SK-N-SH (cell line): ENCODE measurements at regions of chr22 and their contacts with region 1.

Region 1: DNA sequence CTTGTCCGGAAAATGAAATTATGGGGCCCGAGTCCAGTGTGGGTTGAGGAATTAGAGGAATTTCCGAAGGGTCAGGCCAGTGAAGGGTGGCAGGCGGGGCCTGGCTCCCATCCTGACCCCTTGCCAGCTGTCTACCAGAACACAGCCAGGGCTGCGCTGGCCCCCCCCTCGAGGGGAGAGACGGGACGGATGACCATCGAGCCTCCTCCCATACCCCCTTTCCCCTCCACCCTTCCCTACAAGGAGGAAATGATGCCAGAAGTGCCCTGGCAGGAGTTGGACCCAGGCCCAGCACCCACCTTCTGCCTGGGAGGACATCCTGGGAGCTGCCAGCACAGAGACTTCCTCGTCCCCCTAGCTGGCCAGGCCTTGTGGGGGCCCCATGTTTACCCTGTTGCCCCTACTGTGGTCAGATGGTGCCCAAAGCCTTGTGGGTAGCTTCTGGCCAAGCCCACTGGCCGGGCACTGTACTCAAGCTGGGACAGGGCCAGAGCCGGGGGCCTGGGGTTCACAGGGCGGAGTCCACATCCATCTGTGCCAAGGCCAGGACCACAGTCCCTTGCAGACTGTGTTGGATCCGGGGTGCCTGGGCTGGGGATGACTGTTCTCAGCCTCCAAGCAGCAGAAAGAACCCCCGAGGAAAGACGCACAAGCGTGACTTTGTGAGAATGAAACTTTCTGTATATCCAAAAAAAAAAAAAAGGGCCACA is 20.8 kb downstream of the ARVCF start:
- DNase-seq: no peak
- H3K4me3 ChIP-seq: no peak overlapping the region
- H3K27ac ChIP-seq: peak overlapping the region; percentile 47 to 97
- H3K4me1 ChIP-seq: peaks cover 0 to 85% of the 10 kb centered on the region in 2 experiments; a peak in 2 of 4 replicates
- H3K27me3 ChIP-seq: no peaks in the 10 kb centered on the region
- CTCF ChIP-seq: no peak
- EP300 ChIP-seq: no peak
- RAD21 ChIP-seq: no peak

Region 2: DNA sequence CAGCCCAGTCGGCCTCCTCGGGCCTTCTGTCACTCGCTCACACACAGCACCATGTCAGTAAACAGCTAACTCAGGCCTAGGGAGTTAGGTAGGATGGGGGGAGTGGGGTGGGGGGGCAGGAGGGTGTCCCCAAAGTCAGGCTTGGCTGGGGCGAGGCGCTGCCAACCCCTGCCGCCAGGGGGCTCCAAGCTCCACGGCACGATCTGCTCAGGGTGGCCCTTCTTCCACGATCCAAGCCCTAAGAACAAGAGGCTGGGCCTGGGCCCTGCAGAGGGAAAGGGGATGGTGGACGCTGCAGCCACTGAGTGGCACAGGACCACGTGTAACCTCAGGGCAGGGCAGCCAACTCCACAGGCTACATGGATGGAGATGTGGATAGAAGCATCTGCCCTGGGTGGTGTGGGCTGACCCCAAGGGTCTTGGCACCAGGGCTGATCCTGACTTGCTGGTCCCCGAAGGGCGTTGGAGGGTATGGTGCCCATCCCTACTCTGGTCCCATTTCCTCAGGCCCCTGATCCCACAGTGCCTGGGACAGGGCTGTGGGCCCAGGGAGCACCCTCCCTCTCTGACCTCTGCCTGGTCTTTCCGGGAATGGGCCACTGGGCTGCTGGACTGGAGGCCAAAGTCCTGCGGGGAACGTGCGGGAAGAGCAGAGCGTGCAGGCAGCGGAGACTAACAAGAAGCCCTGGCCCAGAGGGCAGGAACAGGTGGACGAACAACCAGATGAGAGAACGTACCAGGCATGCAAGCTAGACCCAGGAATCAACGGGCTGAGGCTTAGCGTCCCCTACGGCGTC is 25.1 kb before region 1 on chr22:
- CTCF ChIA-PET with region 1: interaction called, 19 read pairs
- POLR2A ChIA-PET with region 1: interaction called, 3 read pairs
- DNase-seq: peak; percentile 91
- H3K4me3 ChIP-seq: peak overlapping the region in 1 of 2 experiments; percentile 39; a peak in 1 of 4 replicates
- H3K27ac ChIP-seq: peak overlapping the region in 1 of 2 experiments; percentile 35; a peak in 1 of 4 replicates
- H3K4me1 ChIP-seq: peaks cover 0 to 24% of the 10 kb centered on the region in 2 experiments; a peak in 1 of 4 replicates
- H3K27me3 ChIP-seq: no peaks in the 10 kb centered on the region
- CTCF ChIP-seq: peak; percentile 86
- EP300 ChIP-seq: no peak
- RAD21 ChIP-seq: peak; percentile 91